ENCODE measurements at regions of chr7 and their contacts with region 1.

Region 1: DNA sequence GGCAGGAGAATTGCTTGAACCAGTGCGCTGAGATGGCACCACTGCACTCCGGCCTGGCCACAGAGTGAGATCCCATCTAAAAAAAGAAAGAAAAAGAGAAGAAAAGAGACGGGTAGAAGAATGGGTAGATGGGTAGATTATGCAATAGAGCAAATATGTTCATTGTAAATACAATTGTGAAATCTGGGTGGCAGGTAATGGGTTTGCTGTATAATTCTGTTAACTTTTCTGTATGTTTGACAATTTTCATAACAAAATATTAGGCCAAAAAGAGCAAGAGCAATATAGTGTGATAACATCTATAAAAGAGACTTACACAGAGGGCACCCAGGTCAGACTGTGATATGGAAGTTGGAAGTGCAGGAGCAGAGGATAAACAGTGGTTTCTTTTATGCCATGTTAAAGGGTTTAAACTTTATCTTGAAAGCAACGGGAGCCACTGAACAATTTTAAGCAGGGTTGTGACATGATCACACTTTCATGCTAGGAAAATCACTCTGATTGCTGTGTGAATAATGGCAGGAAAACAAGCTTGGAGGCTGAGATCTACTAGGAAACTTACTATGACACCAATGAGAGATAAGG is 6.7 kb upstream of the COL28A1 start:
- DNase-seq: no peak
- ATAC-seq: no peak

Region 2: DNA sequence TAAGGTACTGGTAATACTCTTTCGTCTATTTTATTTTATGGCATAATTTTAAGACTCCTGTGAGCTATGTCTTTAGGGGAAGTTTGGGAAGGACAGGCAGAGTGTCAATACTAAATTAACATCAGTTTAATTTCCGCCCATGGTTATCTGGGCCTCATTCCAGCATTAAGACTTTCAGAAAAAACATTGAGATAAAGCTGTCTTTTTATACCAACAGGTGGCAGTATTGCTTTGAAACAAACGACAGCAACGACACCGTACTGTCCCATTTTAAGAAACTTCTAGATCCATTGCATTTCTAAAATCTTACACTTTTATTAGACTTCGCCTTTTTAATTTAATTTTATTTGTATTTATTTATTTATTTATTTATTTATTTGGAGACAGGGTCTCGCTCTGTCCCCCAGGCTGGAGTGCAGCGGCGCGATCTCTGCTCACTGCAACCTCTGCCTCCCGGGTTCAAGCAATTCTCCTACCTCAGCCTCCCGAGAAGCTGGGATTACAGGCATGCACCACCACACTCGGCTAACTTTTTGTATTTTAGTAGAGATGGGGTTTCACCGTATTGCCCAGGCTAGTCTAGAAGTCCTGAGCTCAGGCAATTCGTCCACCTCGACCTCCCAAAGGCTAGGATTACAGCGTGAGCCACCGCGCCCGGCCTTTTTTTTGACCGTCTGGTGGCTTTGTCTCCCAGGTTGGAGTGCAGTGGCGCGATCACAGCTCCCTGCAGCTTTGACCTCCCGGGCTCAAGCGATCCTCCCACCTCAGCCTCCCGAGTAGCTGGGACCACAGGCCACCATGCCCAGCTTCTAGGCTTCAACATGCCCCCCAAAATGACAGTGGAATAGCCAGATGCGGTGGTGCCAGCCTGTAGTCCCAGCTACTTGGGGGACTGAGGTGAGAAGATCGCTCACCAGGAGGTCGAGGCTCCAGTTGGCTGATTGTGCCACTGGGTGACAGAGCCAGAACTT is 438.7 kb before region 1 on chr7:
- intact Hi-C with region 1: loop called (anchors 5 kb)
- DNase-seq: no peak
- ATAC-seq: peak; percentile 72

Region 3: GRCh38 chr7:7427363-7427762 is 115.0 kb before region 1 on chr7:
- intact Hi-C with region 1: loop called (anchors 2 kb)
- DNase-seq: no peak
- ATAC-seq: no peak

Region 4: DNA sequence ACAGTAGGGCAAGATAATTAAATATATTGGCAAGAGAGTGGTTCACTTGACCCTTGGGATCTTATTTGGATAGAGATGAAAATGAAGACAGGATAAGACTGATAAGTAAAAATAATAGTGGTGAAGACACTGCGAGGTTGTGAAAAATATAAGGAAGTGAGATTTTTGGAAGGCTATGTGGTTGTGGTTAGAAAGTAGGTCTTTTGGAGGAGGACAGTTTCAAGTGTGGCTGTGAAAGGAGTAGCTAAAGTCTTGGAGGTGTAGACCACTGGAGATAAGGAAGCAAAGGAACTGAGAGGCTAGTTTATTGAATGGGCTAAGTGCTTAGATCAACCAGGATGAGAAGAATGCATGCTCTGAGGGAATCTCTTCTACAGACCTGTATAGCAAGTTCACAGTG is 35.5 kb after region 1 on chr7:
- intact Hi-C with region 1: no loop called
- DNase-seq: no peak
- ATAC-seq: no peak